ENCODE measurements at regions of chr2 and their contacts with region 1.

Region 1: DNA sequence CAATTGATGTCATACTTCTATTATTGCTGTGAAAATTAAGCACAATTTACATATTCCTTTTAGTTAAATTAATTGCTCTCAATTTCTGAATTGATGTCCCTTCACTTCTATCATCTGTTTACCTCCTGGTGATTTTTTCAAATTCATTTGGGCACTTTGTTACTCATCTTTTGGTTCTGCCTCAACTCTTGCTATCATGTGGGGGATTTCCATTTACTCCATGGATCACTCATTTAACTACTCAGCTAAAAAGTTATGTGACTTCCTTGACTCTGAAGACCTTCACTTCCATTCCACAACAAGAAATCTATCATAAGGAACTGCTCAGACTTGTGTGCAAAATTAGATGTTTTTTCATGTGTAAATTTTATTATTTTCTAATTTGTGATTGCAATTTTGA is 126.2 kb downstream of the EHBP1 start:
- DNase-seq: no peak
- H3K4me3 Mint-ChIP-seq: no peak overlapping the region
- H3K27ac Mint-ChIP-seq: no peak overlapping the region
- H3K4me1 Mint-ChIP-seq: peaks cover 3% of the 10 kb centered on the region
- H3K27me3 Mint-ChIP-seq: no peaks in the 10 kb centered on the region

Region 2: DNA sequence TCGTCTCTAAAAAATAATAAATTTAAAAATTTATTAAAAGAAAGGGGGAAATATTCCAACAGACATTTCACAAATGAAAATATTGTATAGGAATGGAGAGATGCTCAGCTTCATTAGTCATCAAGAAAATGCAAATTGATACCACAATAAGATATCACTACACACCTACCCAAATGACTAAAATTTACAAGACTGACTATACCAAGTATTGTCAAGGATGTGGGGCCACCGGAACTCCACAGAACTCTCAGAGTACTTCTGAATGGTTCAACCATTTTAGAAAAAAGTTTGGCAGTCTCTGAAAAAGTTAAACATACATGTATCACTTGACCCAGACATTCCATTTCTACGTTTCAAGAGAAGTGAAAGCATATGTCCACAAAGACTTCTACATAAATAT is 37.2 kb after region 1 on chr2:
- intact Hi-C with region 1: loop called (anchors 5 kb)
- DNase-seq: no peak
- H3K4me3 Mint-ChIP-seq: no peak overlapping the region
- H3K27ac Mint-ChIP-seq: no peak overlapping the region
- H3K4me1 Mint-ChIP-seq: peaks cover 6% of the 10 kb centered on the region
- H3K27me3 Mint-ChIP-seq: no peaks in the 10 kb centered on the region